SK-N-SH (cell line): ENCODE measurements at regions of chr13 and their contacts with region 1.

Region 1: DNA sequence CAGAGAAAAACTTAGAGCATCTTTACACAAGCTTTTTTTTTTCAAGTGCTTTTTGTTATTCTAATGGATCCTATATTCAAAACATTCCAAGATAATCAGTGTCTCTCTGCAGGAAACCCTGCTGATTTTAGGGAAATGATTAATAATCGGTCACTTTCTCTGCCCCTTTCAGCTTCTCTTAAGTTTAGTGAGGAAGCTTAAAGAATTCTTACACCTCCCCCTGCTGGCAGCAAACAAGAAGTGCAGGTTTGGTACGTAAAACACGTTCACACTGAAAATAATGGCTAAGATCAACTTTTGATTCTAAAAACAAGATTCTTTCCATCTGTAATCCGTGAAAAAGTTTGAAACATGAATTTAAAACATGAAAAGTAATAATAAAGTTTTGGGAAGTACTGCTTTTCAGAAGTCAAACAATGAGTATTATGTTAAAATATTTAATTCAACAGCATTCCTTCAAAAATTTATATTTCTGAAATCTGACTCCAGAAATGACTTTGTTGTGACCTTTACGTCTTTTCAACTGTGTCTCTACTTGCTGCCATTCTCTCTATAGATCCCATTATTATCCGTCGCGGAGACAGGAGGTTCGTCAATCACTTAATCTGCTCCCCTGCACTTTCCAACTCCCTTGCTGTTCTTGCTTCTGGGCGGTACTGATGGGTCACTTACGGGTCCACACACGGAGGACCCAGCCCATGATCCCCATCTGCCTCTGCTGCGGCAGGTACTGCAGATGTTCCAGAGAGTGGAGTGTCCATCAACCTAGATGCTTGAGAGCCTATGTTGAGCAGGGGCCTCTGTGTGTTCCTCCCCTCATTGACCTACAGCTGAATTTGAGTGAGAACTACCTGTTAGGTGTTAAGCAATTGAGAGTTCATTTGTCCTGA is 203.1 kb upstream of the EDNRB start:
- DNase-seq: peak; percentile 24
- H3K4me3 ChIP-seq: peak overlapping the region in 1 of 2 experiments; percentile 30; a peak in 1 of 4 replicates
- H3K27ac ChIP-seq: no peak overlapping the region
- H3K4me1 ChIP-seq: no peaks in the 10 kb centered on the region; a peak in 1 of 4 replicates
- H3K27me3 ChIP-seq: 0 out of 2 replicates have a peak, but pooled peaks cover 6% of the 10 kb centered on the region
- CTCF ChIP-seq: peak; percentile 94
- EP300 ChIP-seq: no peak
- RAD21 ChIP-seq: peak; percentile 78

Region 2: GRCh38 chr13:77595166-77595810 is 526.4 kb before region 1 on chr13:
- CTCF ChIA-PET with region 1: interaction called, 10 read pairs
- POLR2A ChIA-PET with region 1: no interaction called
- DNase-seq: no peak
- H3K4me3 ChIP-seq: no peak overlapping the region
- H3K27ac ChIP-seq: no peak overlapping the region
- H3K4me1 ChIP-seq: no peaks in the 10 kb centered on the region; a peak in 1 of 4 replicates
- H3K27me3 ChIP-seq: no peaks in the 10 kb centered on the region
- CTCF ChIP-seq: no peak
- EP300 ChIP-seq: no peak
- RAD21 ChIP-seq: no peak

Region 3: DNA sequence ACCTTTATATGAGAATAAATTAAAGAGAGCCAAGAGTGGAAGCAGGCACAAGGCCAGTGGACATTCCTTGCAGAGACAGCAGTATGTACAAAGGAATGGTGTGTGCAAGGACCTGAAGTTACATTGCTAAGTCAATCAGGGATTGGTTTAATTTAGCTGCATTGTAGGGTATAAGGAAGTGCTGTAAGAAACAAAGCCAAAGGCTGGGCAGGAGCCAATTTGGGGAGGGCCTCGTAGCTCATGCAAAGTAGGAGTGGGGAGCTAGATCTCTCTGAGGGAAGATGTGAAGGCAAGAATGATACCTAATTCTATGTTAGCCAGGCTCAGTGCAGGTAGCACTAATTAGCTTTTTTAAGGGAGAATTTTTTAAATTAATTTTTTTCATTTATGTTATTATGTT is 347.5 kb before region 1 on chr13:
- CTCF ChIA-PET with region 1: interaction called, 23 read pairs
- POLR2A ChIA-PET with region 1: no interaction called
- DNase-seq: no peak
- H3K4me3 ChIP-seq: no peak overlapping the region
- H3K27ac ChIP-seq: no peak overlapping the region
- H3K4me1 ChIP-seq: no peaks in the 10 kb centered on the region
- H3K27me3 ChIP-seq: no peaks in the 10 kb centered on the region
- CTCF ChIP-seq: no peak
- EP300 ChIP-seq: no peak
- RAD21 ChIP-seq: no peak

Region 4: DNA sequence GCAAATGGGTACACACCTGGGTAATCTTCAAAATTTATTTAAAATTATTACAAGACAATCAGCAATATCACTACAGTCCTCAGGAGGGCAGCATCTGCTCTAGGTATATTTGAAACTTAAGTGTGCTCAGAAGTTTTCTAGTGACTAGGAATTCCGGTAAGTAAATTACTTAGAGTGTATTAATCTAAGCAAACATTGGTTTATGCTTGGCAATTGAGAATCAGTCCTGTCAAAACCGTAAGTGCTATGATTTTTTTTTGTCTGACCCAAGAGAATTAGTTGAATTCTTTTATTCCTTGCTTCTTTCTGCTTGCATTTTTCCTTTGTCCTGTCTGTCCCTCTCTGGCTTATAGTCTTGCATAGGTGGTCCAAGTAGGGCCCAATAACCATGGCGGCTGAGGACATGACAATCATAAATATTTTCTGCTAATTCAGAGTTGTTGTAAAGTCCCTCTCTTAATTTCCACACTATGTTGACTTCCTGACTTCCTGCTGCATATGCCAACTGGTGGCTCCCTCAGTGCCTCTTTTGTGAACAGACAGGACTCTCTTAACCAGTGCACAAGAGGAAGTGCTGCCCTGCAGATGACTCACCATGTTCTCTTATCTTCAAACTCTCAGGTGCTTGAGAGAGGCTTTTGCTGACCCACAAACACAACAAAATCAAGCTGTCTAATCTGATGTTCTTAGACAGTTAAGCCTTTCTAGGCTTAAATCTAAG is 342.0 kb before region 1 on chr13:
- CTCF ChIA-PET with region 1: interaction called, 30 read pairs
- POLR2A ChIA-PET with region 1: no interaction called
- DNase-seq: peak; percentile 36
- H3K4me3 ChIP-seq: no peak overlapping the region
- H3K27ac ChIP-seq: no peak overlapping the region
- H3K4me1 ChIP-seq: no peaks in the 10 kb centered on the region; a peak in 1 of 4 replicates
- H3K27me3 ChIP-seq: no peaks in the 10 kb centered on the region
- CTCF ChIP-seq: peak; percentile 78
- EP300 ChIP-seq: no peak
- RAD21 ChIP-seq: peak; percentile 85

Region 5: GRCh38 chr13:77928909-77929308 is 192.8 kb before region 1 on chr13:
- CTCF ChIA-PET with region 1: no interaction called
- POLR2A ChIA-PET with region 1: no interaction called
- DNase-seq: no peak
- H3K4me3 ChIP-seq: no peak overlapping the region
- H3K27ac ChIP-seq: no peak overlapping the region
- H3K4me1 ChIP-seq: no peaks in the 10 kb centered on the region
- H3K27me3 ChIP-seq: no peaks in the 10 kb centered on the region
- CTCF ChIP-seq: no peak
- EP300 ChIP-seq: no peak
- RAD21 ChIP-seq: no peak

Region 6: DNA sequence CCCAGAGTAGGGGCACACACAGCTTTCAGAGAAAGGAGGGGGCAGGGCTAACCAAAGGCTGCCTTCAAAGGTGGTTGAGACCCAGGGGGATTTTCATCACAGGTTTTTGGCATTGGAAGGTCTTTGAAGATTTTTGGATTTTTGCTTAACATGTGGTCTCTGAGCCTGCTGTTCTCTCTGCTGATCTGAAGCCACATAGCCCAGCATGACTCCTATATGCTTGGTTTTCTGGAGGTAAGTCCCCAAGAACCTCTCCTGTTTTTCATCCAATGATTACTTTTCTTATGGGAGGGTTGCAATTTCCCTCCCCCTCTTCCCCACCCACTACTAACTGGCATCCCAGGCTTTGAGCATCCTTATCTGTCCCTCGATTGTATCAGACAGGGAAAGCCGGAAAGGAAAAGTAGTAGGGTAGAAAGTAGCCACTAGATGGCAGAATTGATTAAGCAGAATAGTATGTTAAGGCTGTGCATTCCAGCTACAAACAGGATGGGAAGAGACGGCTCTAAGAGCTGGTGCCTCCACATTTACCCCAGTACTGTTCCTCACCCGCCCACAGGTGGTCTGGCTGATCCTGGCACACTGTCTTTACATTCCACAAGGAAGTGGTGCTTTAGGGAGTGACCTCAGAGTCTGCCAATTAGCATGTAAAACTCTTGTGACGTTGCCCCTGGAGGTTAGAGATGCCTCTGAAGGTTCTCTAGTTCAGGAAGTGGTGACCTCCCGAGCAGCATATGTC is 15.9 kb after region 1 on chr13:
- CTCF ChIA-PET with region 1: interaction called, 10 read pairs
- POLR2A ChIA-PET with region 1: no interaction called
- DNase-seq: peak; percentile 59
- H3K4me3 ChIP-seq: peak overlapping the region in 1 of 2 experiments; percentile 9; a peak in 2 of 4 replicates
- H3K27ac ChIP-seq: no peak overlapping the region
- H3K4me1 ChIP-seq: peaks cover 0 to 11% of the 10 kb centered on the region in 2 experiments; a peak in 2 of 4 replicates
- H3K27me3 ChIP-seq: no peaks in the 10 kb centered on the region
- CTCF ChIP-seq: peak; percentile 84
- EP300 ChIP-seq: no peak
- RAD21 ChIP-seq: peak; percentile 86